Thyroid gland (tissue), 4 donors: ENCODE measurements at regions of chr3 and their contacts with region 1.

Region 1: GRCh38 chr3:172476347-172476746 is 28.1 kb upstream of the GHSR start:
- DNase-seq: no peak
- H3K4me3 ChIP-seq: no peak overlapping the region
- H3K27ac ChIP-seq: no peak overlapping the region
- H3K4me1 ChIP-seq: no peaks in the 10 kb centered on the region
- H3K27me3 ChIP-seq: no peaks in the 10 kb centered on the region
- CTCF ChIP-seq: no peak
- POLR2A ChIP-seq: no peak

Region 2: GRCh38 chr3:172595641-172596393 is 119.5 kb after region 1 on chr3:
- intact Hi-C with region 1: loop called (anchors 10 kb)
- DNase-seq: peak in 1 of 2 donors; percentile 19
- H3K4me3 ChIP-seq: peak overlapping the region in 1 of 3 donors; percentile 3
- H3K27ac ChIP-seq: peak overlapping the region; percentile 42 to 72 (median 57)
- H3K4me1 ChIP-seq: peaks cover 7 to 15% of the 10 kb centered on the region in 2 donors
- H3K27me3 ChIP-seq: no peaks in the 10 kb centered on the region
- CTCF ChIP-seq: peak in 5 of 6 experiments; percentile 34 to 77 (median 66)
- POLR2A ChIP-seq: no peak

Region 3: GRCh38 chr3:172877011-172877410 is 400.7 kb after region 1 on chr3:
- intact Hi-C with region 1: no loop called
- DNase-seq: peak; percentile 21 to 36
- H3K4me3 ChIP-seq: no peak overlapping the region
- H3K27ac ChIP-seq: no peak overlapping the region
- H3K4me1 ChIP-seq: peaks cover 0 to 5% of the 10 kb centered on the region in 2 donors
- H3K27me3 ChIP-seq: no peaks in the 10 kb centered on the region
- CTCF ChIP-seq: no peak
- POLR2A ChIP-seq: no peak